ENCODE measurements at regions of chr13 and their contacts with region 1.

Region 1: GRCh38 chr13:29508130-29508875 is 87.2 kb downstream of the SLC7A1 start:
- DNase-seq: peak; percentile 86 to 91
- H3K4me3 ChIP-seq: no peak overlapping the region
- H3K27ac ChIP-seq: no peak overlapping the region
- H3K4me1 ChIP-seq: peaks cover 4 to 6% of the 10 kb centered on the region in 2 donors
- H3K27me3 ChIP-seq: no peaks in the 10 kb centered on the region
- CTCF ChIP-seq: peak; percentile 89 to 98 (median 92)
- POLR2A ChIP-seq: no peak

Region 2: GRCh38 chr13:29713839-29714238 is 205.5 kb after region 1 on chr13:
- intact Hi-C with region 1: loop called (anchors 10 kb)
- DNase-seq: no peak
- H3K4me3 ChIP-seq: no peak overlapping the region
- H3K27ac ChIP-seq: no peak overlapping the region
- H3K4me1 ChIP-seq: peaks cover 0 to 13% of the 10 kb centered on the region in 2 donors
- H3K27me3 ChIP-seq: no peaks in the 10 kb centered on the region
- CTCF ChIP-seq: peak in 2 of 6 experiments; percentile 21 to 29
- POLR2A ChIP-seq: no peak